ENCODE measurements at regions of chr16 and their contacts with region 1.

Region 1: DNA sequence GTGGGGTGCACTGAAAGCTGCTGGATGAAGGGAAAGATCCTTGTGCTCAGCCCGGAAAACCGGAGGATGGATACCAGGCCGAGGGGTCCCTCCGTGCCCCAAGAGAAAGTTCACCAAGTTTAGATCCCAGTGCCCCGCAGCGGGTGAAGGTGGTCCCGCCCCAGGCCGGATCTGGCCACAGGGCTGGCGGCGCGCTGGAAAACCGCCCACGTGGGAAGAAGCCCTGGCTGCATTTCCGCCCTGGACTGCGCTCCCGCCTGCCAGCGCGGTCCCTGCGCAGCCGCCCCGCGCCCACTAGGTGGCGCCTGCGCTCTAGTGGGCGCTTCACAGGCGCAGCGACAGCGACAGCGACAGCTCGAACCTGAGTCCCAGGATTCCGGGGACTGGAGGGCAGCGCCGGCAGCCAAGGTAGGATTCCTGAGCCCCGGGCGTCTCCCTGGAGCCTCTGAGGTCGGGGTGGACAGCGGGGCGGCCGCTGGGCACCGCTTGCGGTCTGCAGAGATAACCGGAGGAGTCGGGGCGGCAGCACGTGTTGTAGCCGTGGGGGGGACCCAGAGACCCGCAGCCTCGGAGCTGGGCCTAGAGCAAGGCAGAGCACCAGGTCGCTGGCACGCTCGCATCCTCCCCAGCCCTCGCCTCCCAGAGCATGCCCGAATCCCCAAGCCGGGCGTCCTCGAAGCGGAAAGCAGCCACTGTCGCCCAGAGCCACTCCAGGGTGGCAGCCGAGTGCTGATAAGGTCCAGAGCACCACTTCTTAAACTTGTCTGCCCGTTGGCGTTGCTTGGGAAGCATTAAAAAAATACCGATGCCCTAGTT is at the start of gene CHD9:
- DNase-seq: peak; percentile 75 to 90
- ATAC-seq: peak; percentile 94 to 97 (median 95)
- H3K4me3 ChIP-seq: peak within 1 kb of the TSS; percentile 70
- H3K4me3 Mint-ChIP-seq: peak within 1 kb of the TSS; percentile 92
- H3K27ac ChIP-seq: peak within 1 kb of the TSS; percentile 39
- H3K27ac Mint-ChIP-seq: peak within 1 kb of the TSS; percentile 45 to 92
- H3K4me1 ChIP-seq: peaks cover 46% of the 10 kb centered on the region
- H3K4me1 Mint-ChIP-seq: peaks cover 33% of the 10 kb centered on the region in 2 donors
- H3K27me3 ChIP-seq: no peaks in the 10 kb centered on the region
- H3K27me3 Mint-ChIP-seq: no peaks in the 10 kb centered on the region
- CTCF ChIP-seq: peak; percentile 99
- total RNA-seq, gene CHD9: 81.4 to 85.2 (median 81.9) TPM

Region 2: GRCh38 chr16:53099318-53100130 is 44.6 kb after region 1 on chr16:
- intact Hi-C with region 1: loop called (anchors 1 kb)
- DNase-seq: peak; percentile 39 to 75
- ATAC-seq: peak; percentile 60 to 79 (median 79)
- H3K4me3 ChIP-seq: peak overlapping the region; percentile 29
- H3K4me3 Mint-ChIP-seq: peak overlapping the region; percentile 86
- H3K27ac ChIP-seq: peak overlapping the region; percentile 72
- H3K27ac Mint-ChIP-seq: peak overlapping the region; percentile 84 to 96
- H3K4me1 ChIP-seq: peaks cover 35% of the 10 kb centered on the region
- H3K4me1 Mint-ChIP-seq: peaks cover 16 to 35% of the 10 kb centered on the region in 2 donors
- H3K27me3 ChIP-seq: no peaks in the 10 kb centered on the region
- H3K27me3 Mint-ChIP-seq: no peaks in the 10 kb centered on the region
- CTCF ChIP-seq: no peak

Region 3: DNA sequence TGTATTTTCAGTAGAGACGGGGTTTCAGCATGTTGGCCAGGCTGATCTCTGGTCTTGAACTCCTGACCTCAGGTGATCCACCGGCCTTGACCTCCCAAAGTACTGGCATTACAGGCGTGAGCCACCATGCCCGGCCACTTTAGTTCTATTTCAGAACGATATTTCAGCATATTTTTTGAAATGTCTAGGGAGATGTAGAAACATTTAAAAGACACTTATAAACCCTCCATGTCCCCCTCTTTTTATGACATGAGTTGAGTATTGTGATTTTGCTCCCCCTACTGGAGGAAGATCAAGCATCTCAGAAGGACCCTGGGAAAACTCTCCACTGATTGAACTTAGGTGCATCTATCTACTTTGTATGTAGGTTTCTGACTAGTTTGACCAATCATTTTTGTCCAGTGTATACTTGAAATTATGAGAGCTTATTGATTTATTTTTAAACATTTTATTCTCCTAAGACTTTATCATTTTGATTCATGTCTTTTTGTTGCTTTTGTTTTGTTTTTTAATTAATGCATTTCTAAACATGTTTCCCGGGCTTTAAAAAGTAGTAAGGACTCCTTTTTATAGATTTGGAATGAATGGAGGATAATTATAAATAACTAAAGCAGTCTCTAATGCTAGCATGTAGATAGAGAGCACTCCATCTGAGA is 105.0 kb after region 1 on chr16:
- intact Hi-C with region 1: loop called (anchors 1 kb)
- DNase-seq: peak in 1 of 2 donors; percentile 81
- ATAC-seq: peak; percentile 72 to 76 (median 74)
- H3K4me3 ChIP-seq: no peak overlapping the region
- H3K4me3 Mint-ChIP-seq: no peak overlapping the region
- H3K27ac ChIP-seq: no peak overlapping the region
- H3K27ac Mint-ChIP-seq: no peak overlapping the region
- H3K4me1 ChIP-seq: no peaks in the 10 kb centered on the region
- H3K4me1 Mint-ChIP-seq: no peaks in the 10 kb centered on the region
- H3K27me3 ChIP-seq: no peaks in the 10 kb centered on the region
- H3K27me3 Mint-ChIP-seq: no peaks in the 10 kb centered on the region
- CTCF ChIP-seq: peak; percentile 84

Region 4: DNA sequence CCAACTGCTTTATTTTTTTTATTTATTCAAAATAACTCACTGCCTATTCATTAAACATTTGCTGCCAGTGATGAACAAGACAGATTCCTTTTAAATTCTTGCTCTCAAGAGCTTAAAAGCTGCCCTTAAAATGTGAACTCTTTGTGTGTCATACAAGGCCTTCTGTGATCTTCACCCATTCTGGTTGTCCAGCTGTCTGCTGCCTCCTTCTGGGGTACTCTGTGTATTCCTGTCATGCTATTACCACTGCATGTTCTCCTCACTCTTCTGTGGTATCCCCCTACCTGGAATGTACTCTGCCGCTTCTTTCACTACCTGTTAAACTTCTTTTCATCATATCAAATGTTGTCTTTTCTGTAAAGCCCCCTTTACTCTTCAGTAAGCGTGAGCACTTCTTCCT is 165.7 kb after region 1 on chr16:
- intact Hi-C with region 1: loop called (anchors 1 kb)
- DNase-seq: peak in 1 of 2 donors; percentile 46
- ATAC-seq: peak; percentile 76 to 93 (median 84)
- H3K4me3 ChIP-seq: no peak overlapping the region
- H3K4me3 Mint-ChIP-seq: no peak overlapping the region
- H3K27ac ChIP-seq: no peak overlapping the region
- H3K27ac Mint-ChIP-seq: no peak overlapping the region
- H3K4me1 ChIP-seq: no peaks in the 10 kb centered on the region
- H3K4me1 Mint-ChIP-seq: peaks cover 6 to 7% of the 10 kb centered on the region in 2 donors
- H3K27me3 ChIP-seq: no peaks in the 10 kb centered on the region
- H3K27me3 Mint-ChIP-seq: no peaks in the 10 kb centered on the region
- CTCF ChIP-seq: peak; percentile 32

Region 5: GRCh38 chr16:53509906-53510703 is 455.2 kb after region 1 on chr16:
- intact Hi-C with region 1: loop called (anchors 10 kb)
- DNase-seq: peak; percentile 34 to 85
- ATAC-seq: peak; percentile 76 to 81 (median 76)
- H3K4me3 ChIP-seq: no peak overlapping the region
- H3K4me3 Mint-ChIP-seq: peak overlapping the region; percentile 63
- H3K27ac ChIP-seq: no peak overlapping the region
- H3K27ac Mint-ChIP-seq: peak overlapping the region; percentile 46 to 80
- H3K4me1 ChIP-seq: peaks cover 40% of the 10 kb centered on the region
- H3K4me1 Mint-ChIP-seq: peaks cover 43 to 52% of the 10 kb centered on the region in 2 donors
- H3K27me3 ChIP-seq: no peaks in the 10 kb centered on the region
- H3K27me3 Mint-ChIP-seq: no peaks in the 10 kb centered on the region
- CTCF ChIP-seq: peak; percentile 97

Measured in natural killer cell (primary cell).